Posterior vena cava (tissue), 2 donors: ENCODE measurements at regions of chr9 and their contacts with region 1.

Region 1: DNA sequence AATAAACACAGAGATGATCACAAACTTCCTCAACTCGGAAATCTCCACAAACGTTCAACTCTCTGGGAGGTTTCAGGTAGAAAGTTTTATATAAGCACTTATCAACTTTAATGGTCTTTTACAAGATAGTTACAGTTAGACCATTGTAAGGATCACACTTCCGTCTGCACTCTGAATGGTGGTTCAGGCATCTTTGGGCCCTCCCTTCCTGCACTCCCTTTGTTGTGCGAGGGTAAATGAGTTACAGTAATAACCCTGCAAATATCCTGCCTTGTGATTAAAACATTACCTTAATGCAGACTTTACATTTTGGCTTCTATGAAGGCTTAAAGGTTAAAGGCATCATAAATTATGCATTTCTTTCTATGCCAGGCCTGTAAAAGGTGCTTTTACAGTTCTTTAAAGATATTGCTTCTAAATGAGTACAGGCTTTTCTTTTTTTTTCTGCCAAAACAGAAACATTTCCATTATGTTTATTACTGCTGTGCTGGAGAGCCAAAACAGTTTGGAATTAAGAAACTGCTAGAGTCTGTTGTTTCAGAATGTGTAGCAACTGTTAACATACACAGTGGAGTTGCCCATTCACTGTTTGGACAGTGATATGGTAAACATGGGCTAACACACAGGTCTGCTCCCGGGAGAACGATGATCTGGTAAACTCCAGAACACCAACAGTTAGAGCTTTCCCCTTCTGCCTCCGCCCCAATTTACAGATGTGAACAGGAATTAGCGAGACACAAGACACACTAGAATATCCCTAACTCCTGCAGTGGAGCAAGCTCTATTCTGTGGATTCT is 1.1 kb downstream of the PRUNE2 start:
- DNase-seq: no peak

Region 2: GRCh38 chr9:76835571-76836283 is 69.1 kb before region 1 on chr9:
- intact Hi-C with region 1: loop called in 1 of 2 experiments (anchors 5 kb)
- DNase-seq: no peak

Region 3: DNA sequence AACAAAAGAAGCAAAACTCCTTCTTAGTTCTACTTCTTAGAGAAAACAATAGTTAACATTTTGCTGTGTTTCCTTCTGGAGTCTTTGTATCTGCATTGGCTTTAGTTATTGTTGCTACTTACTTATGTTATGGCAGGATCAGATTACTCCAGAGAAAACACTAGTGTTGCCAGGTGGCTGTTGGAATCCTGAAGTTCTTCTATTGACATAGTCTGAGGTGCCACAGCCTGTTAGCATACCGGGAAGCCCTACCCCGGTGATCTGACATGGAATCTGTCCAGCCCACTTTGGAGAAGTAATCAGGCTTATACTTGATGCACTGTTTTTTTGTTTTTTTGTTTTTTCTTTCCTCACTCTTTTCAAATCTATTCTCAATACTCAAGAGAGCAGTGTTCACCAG is 1262.5 kb after region 1 on chr9:
- intact Hi-C with region 1: no loop called
- DNase-seq: no peak